ENCODE measurements at regions of chr4 and their contacts with region 1.

Region 1: GRCh38 chr4:107444-108429 is 16.6 kb upstream of the ZNF718 start:
- DNase-seq: peak; percentile 18
- ATAC-seq: no peak
- H3K4me3 Mint-ChIP-seq: no peak overlapping the region
- H3K27ac Mint-ChIP-seq: no peak overlapping the region
- H3K4me1 Mint-ChIP-seq: peaks cover 2% of the 10 kb centered on the region
- H3K27me3 Mint-ChIP-seq: peaks cover 51% of the 10 kb centered on the region

Region 2: GRCh38 chr4:242121-242848 is 134.5 kb after region 1 on chr4:
- CTCF ChIA-PET with region 1: interaction called, 3 read pairs
- POLR2A ChIA-PET with region 1: no interaction called
- intact Hi-C with region 1: loop called in 1 of 2 experiments (anchors 5 kb)
- DNase-seq: peak; percentile 81
- ATAC-seq: peak; percentile 96
- H3K4me3 Mint-ChIP-seq: peak overlapping the region; percentile 76
- H3K27ac Mint-ChIP-seq: peak overlapping the region; percentile 86
- H3K4me1 Mint-ChIP-seq: peaks cover 7% of the 10 kb centered on the region
- H3K27me3 Mint-ChIP-seq: no peaks in the 10 kb centered on the region

Region 3: GRCh38 chr4:271492-272103 is 163.9 kb after region 1 on chr4:
- CTCF ChIA-PET with region 1: no interaction called
- POLR2A ChIA-PET with region 1: no interaction called
- intact Hi-C with region 1: no loop called
- DNase-seq: no peak
- ATAC-seq: no peak
- H3K4me3 Mint-ChIP-seq: no peak overlapping the region
- H3K27ac Mint-ChIP-seq: no peak overlapping the region
- H3K4me1 Mint-ChIP-seq: no peaks in the 10 kb centered on the region
- H3K27me3 Mint-ChIP-seq: no peaks in the 10 kb centered on the region

Measured in activated CD4-positive, alpha-beta T cell treated with anti-CD3 and anti-CD28 coated beads for 36 hours (primary cell).